Activated CD4-positive, alpha-beta T cell treated with anti-CD3 and anti-CD28 coated beads for 36 hours (primary cell): ENCODE measurements at regions of chr18 and their contacts with region 1.

Region 1: GRCh38 chr18:2589345-2590068 is 18.1 kb downstream of the NDC80 start:
- DNase-seq: no peak
- ATAC-seq: peak; percentile 78
- H3K4me3 Mint-ChIP-seq: peak overlapping the region; percentile 43
- H3K27ac Mint-ChIP-seq: peak overlapping the region; percentile 93
- H3K4me1 Mint-ChIP-seq: peaks cover 44% of the 10 kb centered on the region
- H3K27me3 Mint-ChIP-seq: no peaks in the 10 kb centered on the region

Region 2: GRCh38 chr18:2723207-2723606 is 133.7 kb after region 1 on chr18:
- CTCF ChIA-PET with region 1: no interaction called
- POLR2A ChIA-PET with region 1: interaction called, 3 read pairs
- intact Hi-C with region 1: loop called in 1 of 2 experiments (anchors 5 kb)
- DNase-seq: no peak
- ATAC-seq: peak; percentile 63
- H3K4me3 Mint-ChIP-seq: no peak overlapping the region
- H3K27ac Mint-ChIP-seq: peak overlapping the region; percentile 58
- H3K4me1 Mint-ChIP-seq: peaks cover 31% of the 10 kb centered on the region
- H3K27me3 Mint-ChIP-seq: no peaks in the 10 kb centered on the region

Region 3: DNA sequence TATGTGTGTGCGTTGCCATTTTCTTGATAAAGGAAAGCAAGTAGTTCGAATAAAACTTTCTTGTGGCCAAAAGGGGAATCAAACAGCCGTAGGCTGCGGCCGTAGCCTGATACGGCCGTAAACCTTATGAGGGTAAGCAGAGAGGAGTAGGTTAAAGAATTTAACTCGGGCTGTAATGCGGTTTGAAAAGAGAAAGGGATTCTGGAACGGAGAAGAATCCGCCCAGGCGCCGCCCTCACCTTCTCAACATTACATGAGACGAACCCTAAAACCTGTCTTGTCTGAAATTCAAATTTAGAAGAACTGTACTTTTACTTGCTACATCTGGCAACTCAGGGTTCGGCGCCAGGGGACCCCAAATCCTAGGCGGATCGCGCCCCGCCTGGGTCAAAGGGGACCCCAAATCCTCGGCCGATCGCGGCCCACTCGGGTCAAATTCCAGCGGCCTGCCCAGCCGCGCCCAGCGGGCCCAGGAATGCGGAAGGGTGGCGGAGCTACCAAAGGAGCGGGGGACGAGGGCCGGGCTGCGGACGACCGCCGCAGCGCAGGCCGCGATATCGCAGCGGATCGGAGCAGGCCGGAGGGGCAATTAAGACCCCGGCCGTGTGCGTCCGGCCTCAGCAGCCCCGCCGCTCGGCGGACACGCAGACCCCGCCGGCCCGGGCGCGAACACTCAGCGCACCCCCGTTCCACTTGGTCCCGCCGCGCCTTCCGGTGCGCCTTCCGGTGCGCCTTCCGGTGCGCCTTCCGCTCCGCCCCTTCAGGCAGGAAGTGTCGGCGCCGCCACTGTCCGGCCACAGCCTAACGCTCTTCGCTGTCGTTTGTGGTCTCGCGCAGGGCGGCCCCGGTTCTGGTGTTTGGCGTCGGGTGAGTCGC is 672.1 kb after region 1 on chr18 and contains the start of gene MYL12B:
- CTCF ChIA-PET with region 1: no interaction called
- POLR2A ChIA-PET with region 1: no interaction called
- intact Hi-C with region 1: loop called in 1 of 2 experiments (anchors 5 kb)
- DNase-seq: peak; percentile 88
- ATAC-seq: peak; percentile 77
- H3K4me3 Mint-ChIP-seq: peak within 1 kb of the TSS; percentile 88
- H3K27ac Mint-ChIP-seq: peak within 1 kb of the TSS; percentile 96
- H3K4me1 Mint-ChIP-seq: peaks cover 59% of the 10 kb centered on the region
- H3K27me3 Mint-ChIP-seq: no peaks in the 10 kb centered on the region
- total RNA-seq, gene MYL12B: 282 to 301 TPM

Region 4: GRCh38 chr18:3634250-3634939 is 1044.9 kb after region 1 on chr18:
- CTCF ChIA-PET with region 1: no interaction called
- POLR2A ChIA-PET with region 1: no interaction called
- intact Hi-C with region 1: no loop called
- DNase-seq: no peak
- ATAC-seq: peak; percentile 61
- H3K4me3 Mint-ChIP-seq: no peak overlapping the region
- H3K27ac Mint-ChIP-seq: peak overlapping the region; percentile 24
- H3K4me1 Mint-ChIP-seq: peaks cover 24% of the 10 kb centered on the region
- H3K27me3 Mint-ChIP-seq: no peaks in the 10 kb centered on the region